Posterior vena cava (tissue), 2 donors: ENCODE measurements at regions of chr17 and their contacts with region 1.

Region 1: GRCh38 chr17:31388770-31389661 is 2.5 kb upstream of the RAB11FIP4 start:
- DNase-seq: peak; percentile 75

Region 2: GRCh38 chr17:31448467-31449077 is 59.6 kb after region 1 on chr17:
- intact Hi-C with region 1: loop called in 1 of 2 experiments (anchors 10 kb)
- DNase-seq: no peak

Region 3: GRCh38 chr17:31472137-31472536 is 83.1 kb after region 1 on chr17:
- intact Hi-C with region 1: no loop called
- DNase-seq: no peak